ENCODE measurements at regions of chr19 and their contacts with region 1.

Region 1: DNA sequence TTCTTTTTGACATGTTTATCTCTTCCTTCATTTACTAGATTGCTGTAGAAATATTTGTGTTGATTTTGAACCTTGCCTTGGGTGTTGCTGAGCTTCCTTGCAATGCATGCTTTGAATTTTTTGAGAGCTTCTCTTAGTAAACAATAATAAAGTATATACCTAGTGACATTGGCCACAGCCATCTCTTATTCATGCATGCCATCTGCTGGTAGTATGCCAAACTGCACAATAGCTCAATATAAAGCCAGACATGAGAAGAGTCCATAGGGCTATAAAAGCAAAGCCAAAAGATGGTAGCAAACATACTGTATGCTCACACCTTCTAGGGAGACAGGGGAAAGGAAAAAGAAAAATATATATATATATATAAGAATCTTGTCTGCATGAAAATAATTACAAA is 18.9 kb upstream of the ZSCAN5A start:
- DNase-seq: peak; percentile 29 to 60
- H3K4me3 ChIP-seq: no peak overlapping the region
- H3K4me1 ChIP-seq: no peaks in the 10 kb centered on the region
- H3K27me3 ChIP-seq: no peaks in the 10 kb centered on the region

Region 2: GRCh38 chr19:55703790-55704215 is 629.7 kb before region 1 on chr19:
- in situ Hi-C with region 1: loop called (anchors 25 kb)
- DNase-seq: peak in 1 of 2 experiments; percentile 33
- H3K4me3 ChIP-seq: no peak overlapping the region
- H3K4me1 ChIP-seq: no peaks in the 10 kb centered on the region
- H3K27me3 ChIP-seq: no peaks in the 10 kb centered on the region